Caco-2 (cell line): ENCODE measurements at regions of chr11 and their contacts with region 1.

Region 1: GRCh38 chr11:83836883-83837654 is 550.9 kb upstream of the CCDC90B start:
- DNase-seq: peak; percentile 61 to 68
- H3K4me3 ChIP-seq: no peak overlapping the region
- H3K4me3 Mint-ChIP-seq: no peak overlapping the region
- H3K27ac Mint-ChIP-seq: no peak overlapping the region
- H3K4me1 ChIP-seq: no peaks in the 10 kb centered on the region
- H3K4me1 Mint-ChIP-seq: no peaks in the 10 kb centered on the region
- H3K27me3 ChIP-seq: no peaks in the 10 kb centered on the region
- H3K27me3 Mint-ChIP-seq: peaks cover 28% of the 10 kb centered on the region
- CTCF ChIP-seq: peak; percentile 95 to 98

Region 2: GRCh38 chr11:83071567-83072349 is 765.3 kb before region 1 on chr11 and contains the start of gene RAB30:
- CTCF ChIA-PET with region 1: no interaction called
- POLR2A ChIA-PET with region 1: no interaction called
- intact Hi-C with region 1: no loop called
- DNase-seq: peak; percentile 99 to 100
- H3K4me3 ChIP-seq: peak within 1 kb of the TSS; percentile 62
- H3K4me3 Mint-ChIP-seq: no peak within 1 kb of the TSS
- H3K27ac Mint-ChIP-seq: no peak within 1 kb of the TSS
- H3K4me1 ChIP-seq: peaks cover 33% of the 10 kb centered on the region
- H3K4me1 Mint-ChIP-seq: peaks cover 26% of the 10 kb centered on the region
- H3K27me3 ChIP-seq: no peaks in the 10 kb centered on the region
- H3K27me3 Mint-ChIP-seq: no peaks in the 10 kb centered on the region
- CTCF ChIP-seq: no peak
- total RNA-seq, gene RAB30: 13.0 and 13.5 TPM in 2 replicates

Region 3: DNA sequence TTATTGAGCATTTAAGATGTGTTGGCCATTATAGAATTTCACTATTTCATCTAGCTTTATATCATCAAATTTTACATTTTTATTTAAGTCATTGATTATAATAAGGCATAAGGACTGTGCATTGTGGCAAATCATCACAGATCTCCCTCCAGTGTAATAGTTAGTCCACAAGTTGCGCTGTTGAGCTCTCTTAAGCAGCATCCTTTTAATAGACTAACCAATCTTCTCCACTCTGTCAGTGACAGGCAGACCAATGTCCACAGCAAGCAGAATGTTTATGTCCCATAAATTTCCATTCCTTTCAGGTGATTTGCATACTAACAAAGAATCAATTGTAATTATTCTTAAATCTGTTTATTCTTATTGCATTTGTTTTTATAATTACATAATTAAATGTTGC is 44.4 kb after region 1 on chr11:
- CTCF ChIA-PET with region 1: interaction called, 3 read pairs
- POLR2A ChIA-PET with region 1: no interaction called
- intact Hi-C with region 1: loop called (anchors 1 kb)
- DNase-seq: peak in 1 of 2 experiments; percentile 29
- H3K4me3 ChIP-seq: no peak overlapping the region
- H3K4me3 Mint-ChIP-seq: no peak overlapping the region
- H3K27ac Mint-ChIP-seq: no peak overlapping the region
- H3K4me1 ChIP-seq: no peaks in the 10 kb centered on the region
- H3K4me1 Mint-ChIP-seq: no peaks in the 10 kb centered on the region
- H3K27me3 ChIP-seq: no peaks in the 10 kb centered on the region
- H3K27me3 Mint-ChIP-seq: peaks cover 6% of the 10 kb centered on the region
- CTCF ChIP-seq: peak; percentile 16 to 50

Region 4: DNA sequence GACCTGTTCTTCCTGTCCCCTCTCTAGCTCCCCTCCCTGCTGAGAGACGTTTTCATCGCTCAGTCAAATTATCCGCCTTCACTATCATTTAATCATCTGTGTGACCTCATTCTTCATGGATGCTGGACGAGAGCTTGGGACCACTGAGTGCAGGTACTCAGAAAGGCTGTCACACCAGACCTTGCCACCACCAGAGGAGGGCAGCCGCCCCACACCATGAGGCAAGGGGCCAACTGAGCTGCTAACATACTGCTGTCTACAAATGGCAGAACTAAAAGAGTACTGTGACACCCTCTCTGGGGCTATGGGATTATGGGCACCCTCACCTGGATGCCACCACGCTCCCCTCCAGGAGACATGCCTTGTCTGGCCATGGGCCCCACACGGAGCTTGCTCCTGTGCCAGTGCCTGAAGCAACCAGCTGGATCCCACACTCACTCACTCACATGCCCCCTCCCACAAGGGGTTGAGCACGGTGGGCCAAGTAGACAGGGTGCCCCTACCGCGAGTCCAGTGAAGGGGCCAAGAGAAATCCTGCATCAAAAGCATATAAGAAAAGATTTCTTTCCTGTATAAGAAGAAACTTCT is 119.1 kb after region 1 on chr11:
- CTCF ChIA-PET with region 1: interaction called, 3 read pairs
- POLR2A ChIA-PET with region 1: no interaction called
- intact Hi-C with region 1: loop called (anchors 5 kb)
- DNase-seq: peak in 1 of 2 experiments; percentile 20
- H3K4me3 ChIP-seq: no peak overlapping the region
- H3K4me3 Mint-ChIP-seq: no peak overlapping the region
- H3K27ac Mint-ChIP-seq: no peak overlapping the region
- H3K4me1 ChIP-seq: no peaks in the 10 kb centered on the region
- H3K4me1 Mint-ChIP-seq: peaks cover 6% of the 10 kb centered on the region
- H3K27me3 ChIP-seq: no peaks in the 10 kb centered on the region
- H3K27me3 Mint-ChIP-seq: peaks cover 5% of the 10 kb centered on the region
- CTCF ChIP-seq: peak in 1 of 2 experiments; percentile 11

Region 5: DNA sequence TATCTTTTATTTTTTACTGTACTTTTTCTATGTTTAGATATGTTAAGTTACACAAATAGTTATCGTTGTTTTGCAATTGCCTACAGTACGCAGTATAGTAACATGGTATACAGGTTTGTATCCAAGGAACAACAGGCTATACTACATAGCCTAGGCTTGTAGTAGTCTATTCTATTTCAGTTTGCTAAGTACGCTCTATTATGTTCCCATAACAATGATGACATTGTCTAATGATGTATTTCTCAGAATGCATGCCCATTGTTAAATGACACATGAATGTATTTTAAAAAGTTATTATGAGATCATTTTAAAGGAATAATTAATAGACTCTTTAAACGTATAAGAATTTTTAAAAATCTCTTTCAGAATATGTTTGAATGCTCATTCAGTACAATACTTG is 145.8 kb after region 1 on chr11:
- CTCF ChIA-PET with region 1: no interaction called
- POLR2A ChIA-PET with region 1: no interaction called
- intact Hi-C with region 1: no loop called
- DNase-seq: no peak
- H3K4me3 ChIP-seq: no peak overlapping the region
- H3K4me3 Mint-ChIP-seq: no peak overlapping the region
- H3K27ac Mint-ChIP-seq: no peak overlapping the region
- H3K4me1 ChIP-seq: no peaks in the 10 kb centered on the region
- H3K4me1 Mint-ChIP-seq: no peaks in the 10 kb centered on the region
- H3K27me3 ChIP-seq: no peaks in the 10 kb centered on the region; the same call in 1 of the 2 replicates
- H3K27me3 Mint-ChIP-seq: no peaks in the 10 kb centered on the region
- CTCF ChIP-seq: no peak

Region 6: GRCh38 chr11:84146826-84147225 is 309.8 kb after region 1 on chr11:
- CTCF ChIA-PET with region 1: interaction called, 6 read pairs
- POLR2A ChIA-PET with region 1: no interaction called
- intact Hi-C with region 1: loop called (anchors 1 kb)
- DNase-seq: no peak
- H3K4me3 ChIP-seq: no peak overlapping the region
- H3K4me3 Mint-ChIP-seq: no peak overlapping the region
- H3K27ac Mint-ChIP-seq: no peak overlapping the region
- H3K4me1 ChIP-seq: no peaks in the 10 kb centered on the region
- H3K4me1 Mint-ChIP-seq: no peaks in the 10 kb centered on the region
- H3K27me3 ChIP-seq: no peaks in the 10 kb centered on the region
- H3K27me3 Mint-ChIP-seq: peaks cover 6% of the 10 kb centered on the region
- CTCF ChIP-seq: peak; percentile 34 to 35

Region 7: DNA sequence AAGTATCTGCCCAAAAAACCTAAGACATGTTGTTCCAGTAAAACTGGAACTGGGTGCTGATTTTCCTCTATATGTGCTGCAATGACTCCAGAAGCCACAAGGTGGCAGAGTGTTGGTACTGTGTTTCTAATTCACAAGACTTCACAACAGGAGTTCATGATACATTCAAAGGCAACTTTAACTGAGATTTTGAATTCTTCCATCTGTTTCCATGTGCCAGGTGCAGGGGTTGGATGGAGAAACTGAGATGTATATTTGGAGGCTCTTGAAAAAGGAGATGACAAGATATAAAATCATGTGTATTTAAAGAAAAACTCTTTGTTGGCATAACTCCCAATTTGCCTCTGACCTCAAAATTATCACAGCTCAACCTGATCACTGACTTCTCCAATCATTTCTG is 547.7 kb after region 1 on chr11:
- CTCF ChIA-PET with region 1: no interaction called
- POLR2A ChIA-PET with region 1: no interaction called
- intact Hi-C with region 1: loop called (anchors 2 kb)
- DNase-seq: peak; percentile 60 to 68
- H3K4me3 ChIP-seq: no peak overlapping the region
- H3K4me3 Mint-ChIP-seq: no peak overlapping the region
- H3K27ac Mint-ChIP-seq: no peak overlapping the region
- H3K4me1 ChIP-seq: no peaks in the 10 kb centered on the region
- H3K4me1 Mint-ChIP-seq: no peaks in the 10 kb centered on the region
- H3K27me3 ChIP-seq: no peaks in the 10 kb centered on the region; the same call in 1 of the 2 replicates
- H3K27me3 Mint-ChIP-seq: no peaks in the 10 kb centered on the region
- CTCF ChIP-seq: peak; percentile 93 to 96

Region 8: DNA sequence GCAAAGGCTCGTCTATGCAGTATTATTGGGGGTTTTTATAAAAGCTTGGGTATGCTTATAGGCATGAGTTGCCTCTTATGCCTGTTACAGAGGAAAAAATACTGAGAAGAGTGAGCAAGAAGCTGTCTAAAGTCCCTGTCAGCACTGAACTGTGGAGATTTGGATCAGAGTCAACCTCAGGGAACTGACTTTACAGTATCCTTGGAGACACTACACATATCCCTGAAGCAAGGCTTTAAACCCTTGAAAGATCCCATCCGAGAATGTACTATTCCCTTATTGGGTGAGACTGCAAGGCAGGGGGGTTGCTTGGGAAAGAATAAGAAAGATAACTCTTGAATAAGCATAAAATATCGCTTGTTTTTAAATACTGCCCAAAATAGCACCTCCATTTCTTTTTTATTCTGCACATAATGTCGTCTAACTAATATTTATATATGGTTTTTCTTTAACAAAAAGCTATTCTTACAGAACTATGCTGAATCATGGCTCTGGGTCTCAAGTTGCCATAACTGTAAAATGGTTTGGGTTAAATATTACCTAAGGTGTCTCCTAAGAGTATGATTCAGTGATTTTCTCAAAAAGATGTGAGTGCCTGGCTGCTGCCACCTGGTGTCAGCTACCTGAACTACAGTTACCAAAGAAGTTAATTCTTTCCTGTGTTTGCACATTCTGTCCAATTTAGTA is 727.3 kb after region 1 on chr11:
- CTCF ChIA-PET with region 1: no interaction called
- POLR2A ChIA-PET with region 1: no interaction called
- intact Hi-C with region 1: loop called (anchors 1 kb)
- DNase-seq: peak; percentile 75 to 83
- H3K4me3 ChIP-seq: no peak overlapping the region
- H3K4me3 Mint-ChIP-seq: peak overlapping the region; percentile 29
- H3K27ac Mint-ChIP-seq: peak overlapping the region; percentile 82
- H3K4me1 ChIP-seq: peaks cover 13% of the 10 kb centered on the region
- H3K4me1 Mint-ChIP-seq: peaks cover 10% of the 10 kb centered on the region
- H3K27me3 ChIP-seq: no peaks in the 10 kb centered on the region
- H3K27me3 Mint-ChIP-seq: no peaks in the 10 kb centered on the region
- CTCF ChIP-seq: peak; percentile 92 to 97